Mammary epithelial cell (primary cell): ENCODE measurements at regions of chr12 and their contacts with region 1.

Region 1: DNA sequence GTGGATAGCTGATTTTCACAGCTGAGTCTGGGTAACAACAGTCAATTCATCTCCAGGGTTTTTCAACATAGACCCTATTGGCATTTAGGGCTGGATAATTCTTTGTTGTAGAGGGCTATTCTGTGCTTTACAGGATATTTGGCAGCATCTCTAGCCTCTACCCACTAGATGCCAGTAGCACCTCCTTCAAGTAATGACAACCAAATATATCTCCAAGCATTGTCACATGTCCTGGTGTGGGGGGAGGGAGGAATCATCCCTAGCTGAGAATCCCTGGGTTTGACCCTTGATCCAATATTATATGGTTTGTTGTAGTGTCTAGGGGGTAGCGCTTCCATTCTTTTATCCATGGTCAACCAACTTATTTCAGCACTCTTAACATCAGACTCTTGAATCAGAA is 157.2 kb downstream of the ANO4 start:
- DNase-seq: no peak
- H3K4me3 ChIP-seq: no peak overlapping the region
- H3K27ac ChIP-seq: no peak overlapping the region
- H3K4me1 ChIP-seq: peaks cover 5% of the 10 kb centered on the region
- H3K27me3 ChIP-seq: no peaks in the 10 kb centered on the region
- CTCF ChIP-seq: peak in 1 of 2 donors; percentile 29

Region 2: GRCh38 chr12:100987552-100988521 is 36.1 kb after region 1 on chr12:
- CTCF ChIA-PET with region 1: no interaction called
- dilution Hi-C with region 1: loop called (anchors 5 kb)
- in situ Hi-C with region 1: no loop called
- intact Hi-C with region 1: no loop called
- DNase-seq: peak; percentile 48
- H3K4me3 ChIP-seq: no peak overlapping the region
- H3K27ac ChIP-seq: no peak overlapping the region
- H3K4me1 ChIP-seq: no peaks in the 10 kb centered on the region
- H3K27me3 ChIP-seq: no peaks in the 10 kb centered on the region
- CTCF ChIP-seq: peak; percentile 42 to 56

Region 3: GRCh38 chr12:101097829-101098580 is 146.2 kb after region 1 on chr12:
- CTCF ChIA-PET with region 1: no interaction called
- dilution Hi-C with region 1: no loop called
- in situ Hi-C with region 1: no loop called
- intact Hi-C with region 1: no loop called
- DNase-seq: no peak
- H3K4me3 ChIP-seq: no peak overlapping the region
- H3K27ac ChIP-seq: no peak overlapping the region
- H3K4me1 ChIP-seq: no peaks in the 10 kb centered on the region
- H3K27me3 ChIP-seq: no peaks in the 10 kb centered on the region
- CTCF ChIP-seq: no peak

Region 4: GRCh38 chr12:101135920-101136319 is 184.2 kb after region 1 on chr12:
- CTCF ChIA-PET with region 1: no interaction called
- dilution Hi-C with region 1: no loop called
- in situ Hi-C with region 1: no loop called
- intact Hi-C with region 1: no loop called
- DNase-seq: no peak
- H3K4me3 ChIP-seq: no peak overlapping the region
- H3K27ac ChIP-seq: no peak overlapping the region
- H3K4me1 ChIP-seq: no peaks in the 10 kb centered on the region
- H3K27me3 ChIP-seq: no peaks in the 10 kb centered on the region
- CTCF ChIP-seq: no peak